Left cardiac atrium (tissue), 4 donors: ENCODE measurements at regions of chr1 and their contacts with region 1.

Region 1: DNA sequence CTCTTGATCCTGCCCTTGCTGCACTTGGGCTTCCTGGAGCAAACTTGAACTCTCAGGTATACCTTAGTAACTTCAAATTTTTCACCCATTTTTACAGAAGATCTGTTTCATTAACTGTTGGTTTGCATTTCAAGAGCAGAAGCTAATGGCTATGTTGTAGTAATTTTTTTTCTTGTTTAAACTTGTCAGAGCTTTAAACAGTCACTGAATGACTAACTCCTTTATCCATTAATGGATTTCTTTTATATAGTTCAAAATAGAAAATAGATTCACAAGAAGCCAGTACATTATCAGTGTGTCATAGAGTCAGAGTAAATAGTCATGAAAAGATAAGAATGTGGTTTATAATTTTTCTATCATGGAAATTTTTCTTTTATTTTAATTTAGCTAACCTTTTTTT is 13.6 kb downstream of the SRSF11 start:
- DNase-seq: no peak
- ATAC-seq: no peak

Region 2: DNA sequence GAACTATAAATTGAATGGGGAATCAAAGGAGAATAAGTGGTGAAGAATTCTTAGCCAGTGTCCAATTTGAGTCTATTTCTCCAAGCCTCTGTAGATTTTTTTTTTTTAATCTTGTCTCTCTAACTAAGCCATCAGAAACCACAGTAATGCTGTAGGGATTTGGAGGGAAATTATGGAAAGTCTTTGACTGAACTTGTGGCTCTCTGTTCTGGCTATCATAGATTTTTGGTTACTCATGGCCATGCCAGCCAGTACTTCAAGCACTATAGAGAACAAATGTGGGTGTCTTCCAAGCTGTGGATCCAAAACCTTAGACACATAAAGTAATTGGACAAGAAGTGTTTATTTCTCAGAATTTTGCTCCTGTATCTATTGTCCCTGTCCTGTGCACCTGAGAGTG is 177.2 kb before region 1 on chr1:
- intact Hi-C with region 1: no loop called
- DNase-seq: no peak
- ATAC-seq: no peak

Region 3: GRCh38 chr1:70288166-70288565 is 53.4 kb after region 1 on chr1:
- intact Hi-C with region 1: loop called in 1 of 2 experiments (anchors 10 kb)
- DNase-seq: no peak
- ATAC-seq: no peak

Region 4: GRCh38 chr1:70641868-70642267 is 407.1 kb after region 1 on chr1:
- intact Hi-C with region 1: no loop called
- DNase-seq: no peak
- ATAC-seq: no peak